ENCODE measurements at regions of chr3 and their contacts with region 1.

Region 1: DNA sequence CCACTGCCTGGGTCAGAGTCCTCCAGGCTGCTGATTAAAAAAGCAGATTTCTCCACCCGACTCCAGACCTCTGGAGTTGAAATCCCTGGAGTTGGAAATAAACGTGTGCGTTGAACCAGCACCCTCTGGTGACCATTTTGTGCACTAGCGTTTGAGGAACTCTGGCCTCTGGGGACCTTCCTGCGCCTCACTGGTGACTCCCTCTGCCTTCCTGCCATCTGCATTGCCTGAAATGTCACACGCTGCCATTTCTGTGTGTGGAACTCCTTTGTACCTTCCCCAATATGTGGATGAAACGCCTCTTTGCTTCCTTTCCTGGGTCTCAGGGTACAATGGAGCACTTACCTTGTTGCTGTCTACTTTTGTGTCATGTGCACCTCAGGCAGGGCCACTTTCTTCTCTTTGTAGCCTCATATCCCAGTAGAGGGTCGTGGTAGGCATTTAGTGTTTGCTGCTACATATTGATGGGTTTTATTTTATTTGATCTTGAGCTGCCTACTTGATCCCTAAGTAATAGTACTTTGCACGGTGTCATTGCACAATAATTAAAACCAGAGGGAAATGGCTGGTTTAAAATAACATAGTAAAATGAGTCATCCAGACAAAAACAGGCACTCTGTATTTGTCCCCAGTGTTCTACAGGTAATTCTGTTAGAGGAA is 56.8 kb downstream of the GPR171 start:
- DNase-seq: peak; percentile 82
- H3K4me3 Mint-ChIP-seq: no peak overlapping the region
- H3K27ac Mint-ChIP-seq: peak overlapping the region; percentile 28
- H3K4me1 Mint-ChIP-seq: no peaks in the 10 kb centered on the region
- H3K27me3 Mint-ChIP-seq: no peaks in the 10 kb centered on the region
- CTCF ChIP-seq: peak; percentile 90

Region 2: DNA sequence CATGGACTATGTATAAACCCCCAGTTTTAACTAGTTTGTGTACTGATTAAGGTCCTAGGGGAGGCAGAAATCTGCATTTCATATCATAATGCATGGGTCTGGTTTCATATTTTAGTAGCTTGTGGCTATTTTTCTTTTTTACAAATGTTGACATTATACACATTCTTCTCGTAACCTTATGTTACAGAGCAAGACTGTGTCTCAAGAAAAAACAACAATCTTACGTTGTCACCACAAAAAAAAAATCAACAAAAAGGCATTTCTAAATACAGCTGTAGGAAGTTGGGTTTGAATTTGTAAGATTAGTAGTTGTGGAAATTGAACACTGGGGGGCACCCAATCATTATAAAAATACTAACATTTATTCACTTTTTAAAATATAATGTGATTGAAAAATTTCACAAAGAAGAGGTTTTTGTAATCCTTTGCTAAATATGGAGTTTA is 617.8 kb before region 1 on chr3:
- CTCF ChIA-PET with region 1: no interaction called
- POLR2A ChIA-PET with region 1: no interaction called
- intact Hi-C with region 1: loop called (anchors 5 kb)
- DNase-seq: peak; percentile 31
- H3K4me3 Mint-ChIP-seq: no peak overlapping the region
- H3K27ac Mint-ChIP-seq: no peak overlapping the region
- H3K4me1 Mint-ChIP-seq: no peaks in the 10 kb centered on the region
- H3K27me3 Mint-ChIP-seq: no peaks in the 10 kb centered on the region
- CTCF ChIP-seq: peak; percentile 41

Region 3: GRCh38 chr3:150787741-150788370 is 358.3 kb before region 1 on chr3:
- CTCF ChIA-PET with region 1: interaction called, 10 read pairs
- POLR2A ChIA-PET with region 1: interaction called, 3 read pairs
- intact Hi-C with region 1: loop called (anchors 2 kb)
- DNase-seq: peak; percentile 57
- H3K4me3 Mint-ChIP-seq: no peak overlapping the region
- H3K27ac Mint-ChIP-seq: no peak overlapping the region
- H3K4me1 Mint-ChIP-seq: peaks cover 8% of the 10 kb centered on the region
- H3K27me3 Mint-ChIP-seq: no peaks in the 10 kb centered on the region
- CTCF ChIP-seq: peak; percentile 52

Region 4: DNA sequence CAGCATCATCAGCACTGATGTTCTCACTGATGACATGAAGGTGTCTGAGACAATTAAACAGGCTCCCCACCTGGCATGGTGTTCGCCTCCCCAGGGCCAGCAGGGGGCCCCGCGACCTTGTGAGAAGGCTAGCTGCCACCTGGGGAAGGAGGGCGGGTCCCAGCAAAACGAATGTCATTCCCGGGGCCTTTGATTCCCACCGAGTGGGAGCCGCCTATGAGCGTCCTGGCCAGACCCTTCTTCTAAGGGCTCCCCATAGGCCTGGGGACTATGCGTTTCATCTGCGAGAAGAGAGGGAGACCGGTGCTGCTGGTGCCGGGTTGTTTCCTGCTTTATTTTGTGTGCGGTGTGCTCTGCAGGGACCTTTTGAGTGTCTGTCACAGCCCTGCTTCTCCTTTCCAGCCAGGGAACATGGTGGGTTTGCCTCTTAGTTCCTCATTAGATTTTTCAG is 220.4 kb before region 1 on chr3:
- CTCF ChIA-PET with region 1: interaction called, 93 read pairs
- POLR2A ChIA-PET with region 1: interaction called, 3 read pairs
- intact Hi-C with region 1: loop called (anchors 1 kb)
- DNase-seq: peak; percentile 72
- H3K4me3 Mint-ChIP-seq: no peak overlapping the region
- H3K27ac Mint-ChIP-seq: no peak overlapping the region
- H3K4me1 Mint-ChIP-seq: no peaks in the 10 kb centered on the region
- H3K27me3 Mint-ChIP-seq: peaks cover 5% of the 10 kb centered on the region
- CTCF ChIP-seq: peak; percentile 75

Region 5: GRCh38 chr3:151086484-151087456 is 59.4 kb before region 1 on chr3:
- CTCF ChIA-PET with region 1: interaction called, 10 read pairs
- POLR2A ChIA-PET with region 1: no interaction called
- intact Hi-C with region 1: loop called (anchors 1 kb)
- DNase-seq: peak; percentile 43
- H3K4me3 Mint-ChIP-seq: peak overlapping the region; percentile 77
- H3K27ac Mint-ChIP-seq: no peak overlapping the region
- H3K4me1 Mint-ChIP-seq: peaks cover 4% of the 10 kb centered on the region
- H3K27me3 Mint-ChIP-seq: peaks cover 11% of the 10 kb centered on the region
- CTCF ChIP-seq: peak; percentile 26